Activated T-helper 2 cell treated with anti-CD3 and anti-CD28 coated beads, Interferon-gamma antibody, Interleukin-2, Interleukin-4, amounts not matched to agents 10 μg/mL and 5 μg/mL and 100 μg/mL, durations not matched to agents 14 hours and 24 hours and 36 hours (primary cell): ENCODE measurements at regions of chr1 and their contacts with region 1.

Region 1: DNA sequence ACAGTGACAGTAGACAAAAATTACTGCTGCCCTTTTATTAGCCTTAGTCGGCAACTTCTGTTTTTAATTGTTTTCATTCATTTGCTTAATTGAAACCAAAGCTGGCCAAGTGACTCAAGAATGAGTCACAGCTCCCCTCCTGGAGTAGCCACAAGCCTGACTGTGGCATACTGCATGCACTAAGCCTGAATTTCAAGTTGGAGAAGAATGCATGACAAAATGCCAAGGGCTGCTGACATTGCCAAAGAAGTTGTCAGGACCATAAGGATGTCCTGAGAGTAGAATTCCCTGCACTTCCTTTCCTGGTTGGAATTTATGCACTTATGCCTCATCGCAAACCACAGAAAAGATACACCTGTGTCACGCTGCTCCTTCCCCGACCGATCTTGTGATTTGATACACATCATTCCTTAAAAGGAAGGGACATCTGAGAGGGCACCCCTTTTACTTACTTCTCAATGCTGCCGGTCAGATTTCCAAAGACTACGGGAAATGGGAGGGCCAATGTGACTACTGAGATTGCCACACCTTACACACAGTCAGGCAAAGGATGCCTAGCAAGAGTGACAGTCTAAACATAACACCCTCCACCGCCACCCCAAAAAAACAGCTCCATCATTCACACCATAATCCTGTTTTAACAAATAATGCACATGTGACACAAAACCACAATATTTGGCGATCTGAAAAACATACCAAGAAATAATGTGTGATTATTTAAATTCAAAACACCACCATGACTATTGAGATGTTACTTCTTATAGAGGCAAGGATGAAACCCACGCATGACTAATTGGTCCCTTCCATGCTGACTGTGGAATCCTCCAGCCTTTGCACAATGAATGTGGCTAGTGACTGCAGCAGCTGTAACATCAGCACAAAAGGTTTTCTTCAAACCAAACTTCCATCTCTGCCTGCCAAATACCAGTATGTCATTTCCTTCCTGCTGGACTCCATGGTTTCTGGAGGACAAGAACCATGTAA is 28.2 kb downstream of the VAV3 start:
- DNase-seq: no peak
- H3K4me3 Mint-ChIP-seq: peak overlapping the region; percentile 18
- H3K27ac Mint-ChIP-seq: peak overlapping the region; percentile 49
- H3K4me1 Mint-ChIP-seq: peaks cover 57% of the 10 kb centered on the region
- H3K27me3 Mint-ChIP-seq: no peaks in the 10 kb centered on the region

Region 2: GRCh38 chr1:107474877-107475612 is 461.7 kb before region 1 on chr1:
- intact Hi-C with region 1: loop called (anchors 10 kb)
- DNase-seq: no peak
- H3K4me3 Mint-ChIP-seq: no peak overlapping the region
- H3K27ac Mint-ChIP-seq: no peak overlapping the region
- H3K4me1 Mint-ChIP-seq: peaks cover 7% of the 10 kb centered on the region
- H3K27me3 Mint-ChIP-seq: peaks cover 47% of the 10 kb centered on the region

Region 3: GRCh38 chr1:107804134-107804533 is 132.7 kb before region 1 on chr1:
- intact Hi-C with region 1: loop called (anchors 5 kb)
- DNase-seq: no peak
- H3K4me3 Mint-ChIP-seq: peak overlapping the region; percentile 22
- H3K27ac Mint-ChIP-seq: no peak overlapping the region
- H3K4me1 Mint-ChIP-seq: peaks cover 35% of the 10 kb centered on the region
- H3K27me3 Mint-ChIP-seq: peaks cover 2% of the 10 kb centered on the region

Region 4: DNA sequence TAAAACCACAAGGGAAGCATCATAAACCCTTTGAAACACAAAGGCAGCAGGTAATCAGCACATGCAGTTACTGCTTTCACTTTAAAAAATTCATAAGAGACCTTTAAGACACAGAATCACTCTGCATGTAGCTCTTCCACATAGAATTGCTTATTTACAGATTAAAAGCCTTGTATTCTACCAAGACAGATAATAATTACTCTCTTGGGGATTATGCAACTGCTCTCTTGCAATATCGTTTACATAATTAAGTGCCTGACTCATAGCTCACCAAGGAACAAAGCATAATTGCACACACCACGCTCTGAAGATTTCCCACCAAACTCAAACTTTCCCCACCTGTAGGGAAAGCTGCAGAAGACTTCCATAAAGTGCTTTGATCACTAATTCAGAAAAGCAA is 59.7 kb before region 1 on chr1:
- intact Hi-C with region 1: loop called (anchors 5 kb)
- DNase-seq: no peak
- H3K4me3 Mint-ChIP-seq: no peak overlapping the region
- H3K27ac Mint-ChIP-seq: no peak overlapping the region
- H3K4me1 Mint-ChIP-seq: peaks cover 6% of the 10 kb centered on the region
- H3K27me3 Mint-ChIP-seq: peaks cover 2% of the 10 kb centered on the region

Region 5: GRCh38 chr1:107949467-107950253 is 12.9 kb after region 1 on chr1:
- intact Hi-C with region 1: loop called (anchors 2 kb)
- DNase-seq: no peak
- H3K4me3 Mint-ChIP-seq: no peak overlapping the region
- H3K27ac Mint-ChIP-seq: no peak overlapping the region
- H3K4me1 Mint-ChIP-seq: peaks cover 22% of the 10 kb centered on the region
- H3K27me3 Mint-ChIP-seq: peaks cover 6% of the 10 kb centered on the region

Region 6: DNA sequence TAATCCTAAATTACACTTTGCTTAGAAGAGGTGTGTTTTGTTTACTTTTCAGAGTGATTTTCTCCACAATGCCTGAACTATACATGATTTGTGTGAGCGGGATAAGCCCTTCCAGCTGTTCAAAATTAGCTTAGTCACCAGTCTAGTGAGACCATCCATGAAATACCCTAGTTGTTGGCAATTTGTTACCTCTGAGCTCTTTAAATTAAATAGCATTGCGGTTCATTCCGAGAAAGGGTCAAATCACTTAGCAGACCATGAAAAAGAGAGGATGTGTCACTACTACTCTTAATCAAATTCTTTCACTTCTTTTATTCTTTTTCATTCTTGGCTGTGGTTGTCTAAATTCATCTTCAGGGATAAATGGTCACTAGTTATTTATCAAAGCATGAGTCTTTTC is 40.0 kb after region 1 on chr1:
- intact Hi-C with region 1: loop called (anchors 5 kb)
- DNase-seq: no peak
- H3K4me3 Mint-ChIP-seq: no peak overlapping the region
- H3K27ac Mint-ChIP-seq: no peak overlapping the region
- H3K4me1 Mint-ChIP-seq: peaks cover 7% of the 10 kb centered on the region
- H3K27me3 Mint-ChIP-seq: peaks cover 26% of the 10 kb centered on the region

Region 7: DNA sequence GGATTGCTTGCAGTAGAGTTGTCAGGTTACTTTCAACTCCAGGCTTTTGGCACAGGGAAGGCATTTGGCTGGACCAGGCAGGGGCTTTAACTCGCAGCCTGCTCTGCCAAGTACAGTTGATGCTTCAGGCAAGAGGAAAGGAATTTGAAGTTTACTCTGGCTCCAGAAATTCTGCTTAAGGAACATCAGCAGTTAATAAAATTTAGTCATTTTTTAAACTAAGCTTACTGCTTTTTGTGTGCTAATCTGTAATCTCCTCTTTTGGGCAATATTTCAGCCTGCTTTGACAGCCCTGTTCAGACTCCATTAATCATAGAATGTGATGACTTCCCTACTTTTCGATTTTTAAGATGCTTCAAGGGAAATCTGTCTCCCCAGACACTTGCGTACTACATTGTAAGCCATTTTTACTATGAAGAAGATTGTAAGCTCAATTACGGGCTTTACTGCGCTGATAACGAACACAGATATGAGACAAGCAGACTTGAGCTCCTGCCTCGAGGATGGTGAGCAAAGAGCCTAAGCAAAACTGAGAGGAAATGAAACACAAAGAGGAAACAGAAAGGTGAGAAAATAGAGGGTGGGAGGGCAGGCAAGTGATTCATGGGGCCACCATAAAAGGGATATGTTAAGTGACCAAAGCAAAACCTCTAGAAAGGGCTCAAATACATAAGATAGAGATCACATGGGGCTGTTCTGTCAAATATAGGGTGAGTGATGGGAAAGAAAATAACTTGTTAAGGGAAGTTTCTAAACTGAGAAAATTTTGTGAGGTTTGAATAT is 104.8 kb after region 1 on chr1:
- intact Hi-C with region 1: no loop called
- DNase-seq: no peak
- H3K4me3 Mint-ChIP-seq: no peak overlapping the region
- H3K27ac Mint-ChIP-seq: peak overlapping the region; percentile 6
- H3K4me1 Mint-ChIP-seq: peaks cover 26% of the 10 kb centered on the region
- H3K27me3 Mint-ChIP-seq: no peaks in the 10 kb centered on the region

Region 8: DNA sequence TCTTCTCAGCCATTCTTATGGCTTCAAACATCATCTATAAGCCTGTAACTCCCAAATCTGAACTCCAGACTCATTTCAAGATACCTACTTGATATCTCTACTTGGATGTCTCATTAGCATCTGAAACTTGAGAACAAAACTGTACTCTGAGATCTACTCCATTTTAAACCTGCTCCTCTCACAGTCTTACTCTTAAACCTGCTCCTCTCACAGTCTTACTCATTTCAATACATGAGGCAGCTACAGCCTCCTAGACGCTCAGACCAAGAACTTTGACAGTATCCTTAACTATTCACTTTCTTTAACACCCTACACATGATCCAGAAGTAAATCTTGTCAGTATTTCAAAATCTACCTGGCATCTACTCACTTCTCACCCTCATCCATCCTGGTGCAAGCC is 567.7 kb after region 1 on chr1:
- intact Hi-C with region 1: loop called (anchors 2 kb)
- DNase-seq: no peak
- H3K4me3 Mint-ChIP-seq: no peak overlapping the region
- H3K27ac Mint-ChIP-seq: no peak overlapping the region
- H3K4me1 Mint-ChIP-seq: peaks cover 2% of the 10 kb centered on the region
- H3K27me3 Mint-ChIP-seq: peaks cover 38% of the 10 kb centered on the region